Activated B cell treated with CpG ODN at 0.5 μM for 24 hours (primary cell): ENCODE measurements at regions of chr10 and their contacts with region 1.

Region 1: GRCh38 chr10:6174201-6174874 is 28.4 kb upstream of the PFKFB3 start:
- DNase-seq: no peak
- ATAC-seq: no peak
- H3K4me3 Mint-ChIP-seq: no peak overlapping the region
- H3K27ac Mint-ChIP-seq: no peak overlapping the region
- H3K4me1 Mint-ChIP-seq: peaks cover 47% of the 10 kb centered on the region
- H3K27me3 Mint-ChIP-seq: no peaks in the 10 kb centered on the region
- CTCF ChIP-seq: no peak

Region 2: DNA sequence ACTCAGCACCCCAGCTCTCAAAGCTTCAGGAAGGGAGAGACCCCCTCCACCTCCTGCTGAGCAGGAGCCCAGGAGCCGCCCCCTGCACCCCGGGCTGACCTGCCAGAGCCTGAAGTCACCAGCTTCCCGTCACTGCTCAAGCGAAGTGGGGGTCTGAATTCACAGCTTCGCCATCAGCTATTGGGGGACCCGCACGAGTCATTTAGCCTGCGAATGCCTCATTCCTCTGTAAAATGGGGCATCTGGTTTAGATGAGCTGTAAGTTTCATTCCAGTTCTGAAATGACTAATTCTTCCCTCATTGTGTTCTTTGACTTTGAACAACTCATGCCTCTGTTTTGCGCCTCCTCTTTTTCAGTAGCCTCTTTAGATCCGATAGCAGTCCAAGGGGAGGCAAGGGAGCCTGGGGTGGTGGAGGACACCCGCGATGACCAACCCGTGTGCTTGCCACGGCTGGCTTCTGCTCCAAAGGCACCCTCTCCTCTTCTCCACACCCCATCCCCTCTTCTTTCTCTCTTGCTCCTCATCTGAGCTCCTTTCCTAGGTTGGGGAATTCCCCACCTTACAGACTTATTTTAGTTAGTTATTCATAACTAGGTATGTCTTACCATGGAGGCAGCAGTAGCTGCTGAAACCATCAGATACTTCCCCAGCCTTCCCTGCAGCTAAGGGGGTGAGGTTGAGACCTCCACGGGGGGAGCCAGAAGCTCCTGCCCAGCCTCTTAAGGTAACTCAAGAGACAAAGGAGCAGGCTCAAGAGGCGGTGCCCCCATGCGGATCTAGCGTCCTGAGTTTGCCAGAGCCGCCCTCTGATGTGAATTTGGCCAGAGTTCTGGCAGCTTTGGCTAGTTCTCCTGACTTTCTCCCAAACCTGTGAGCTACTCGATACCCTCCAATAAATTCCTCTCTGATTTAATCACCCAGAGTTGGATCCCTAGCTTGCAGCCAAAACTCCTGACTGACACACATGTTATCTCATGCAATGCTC is 37.8 kb before region 1 on chr10:
- CTCF ChIA-PET with region 1: no interaction called
- POLR2A ChIA-PET with region 1: no interaction called
- intact Hi-C with region 1: no loop called
- DNase-seq: no peak
- ATAC-seq: peak; percentile 29
- H3K4me3 Mint-ChIP-seq: peak overlapping the region; percentile 13
- H3K27ac Mint-ChIP-seq: peak overlapping the region; percentile 59
- H3K4me1 Mint-ChIP-seq: peaks cover 36% of the 10 kb centered on the region
- H3K27me3 Mint-ChIP-seq: peaks cover 9% of the 10 kb centered on the region
- CTCF ChIP-seq: no peak

Region 3: DNA sequence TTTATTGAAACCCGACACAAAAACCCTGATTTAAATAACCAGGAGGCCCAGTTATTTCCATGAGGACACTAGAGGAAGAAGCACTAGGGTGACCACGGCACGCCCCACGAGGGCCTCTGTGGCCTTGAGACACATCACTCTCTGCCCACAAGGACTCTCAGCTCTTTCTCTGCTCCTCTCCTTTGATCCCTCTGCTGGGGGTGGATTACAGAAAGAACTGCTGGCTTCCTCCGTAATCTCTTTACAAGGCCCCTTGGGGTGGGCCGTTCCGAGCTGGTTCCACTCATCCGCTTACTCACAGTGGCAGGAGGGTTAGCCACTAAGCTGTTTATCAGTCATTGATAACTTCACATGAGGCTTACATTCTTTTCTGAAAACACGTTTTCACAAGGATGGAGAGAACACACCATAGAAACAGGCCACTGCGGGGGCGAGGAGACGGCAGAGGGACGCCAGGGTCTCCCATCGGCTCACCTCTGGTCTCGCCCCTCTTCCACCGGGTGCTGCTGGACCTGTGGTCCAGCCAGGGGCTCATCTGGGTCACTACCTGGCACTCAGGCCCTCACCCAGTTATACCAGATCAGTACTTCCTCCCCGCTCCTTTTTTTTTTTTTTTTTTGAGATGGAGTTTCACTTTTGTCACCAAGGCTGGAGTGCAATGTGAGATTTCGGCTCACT is 10.8 kb after region 1 on chr10:
- CTCF ChIA-PET with region 1: no interaction called
- POLR2A ChIA-PET with region 1: no interaction called
- intact Hi-C with region 1: loop called (anchors 2 kb)
- DNase-seq: no peak
- ATAC-seq: no peak
- H3K4me3 Mint-ChIP-seq: no peak overlapping the region
- H3K27ac Mint-ChIP-seq: no peak overlapping the region
- H3K4me1 Mint-ChIP-seq: no peaks in the 10 kb centered on the region
- H3K27me3 Mint-ChIP-seq: no peaks in the 10 kb centered on the region
- CTCF ChIP-seq: no peak